Heart right ventricle (tissue), 16 donors: ENCODE measurements at regions of chr19 and their contacts with region 1.

Region 1: DNA sequence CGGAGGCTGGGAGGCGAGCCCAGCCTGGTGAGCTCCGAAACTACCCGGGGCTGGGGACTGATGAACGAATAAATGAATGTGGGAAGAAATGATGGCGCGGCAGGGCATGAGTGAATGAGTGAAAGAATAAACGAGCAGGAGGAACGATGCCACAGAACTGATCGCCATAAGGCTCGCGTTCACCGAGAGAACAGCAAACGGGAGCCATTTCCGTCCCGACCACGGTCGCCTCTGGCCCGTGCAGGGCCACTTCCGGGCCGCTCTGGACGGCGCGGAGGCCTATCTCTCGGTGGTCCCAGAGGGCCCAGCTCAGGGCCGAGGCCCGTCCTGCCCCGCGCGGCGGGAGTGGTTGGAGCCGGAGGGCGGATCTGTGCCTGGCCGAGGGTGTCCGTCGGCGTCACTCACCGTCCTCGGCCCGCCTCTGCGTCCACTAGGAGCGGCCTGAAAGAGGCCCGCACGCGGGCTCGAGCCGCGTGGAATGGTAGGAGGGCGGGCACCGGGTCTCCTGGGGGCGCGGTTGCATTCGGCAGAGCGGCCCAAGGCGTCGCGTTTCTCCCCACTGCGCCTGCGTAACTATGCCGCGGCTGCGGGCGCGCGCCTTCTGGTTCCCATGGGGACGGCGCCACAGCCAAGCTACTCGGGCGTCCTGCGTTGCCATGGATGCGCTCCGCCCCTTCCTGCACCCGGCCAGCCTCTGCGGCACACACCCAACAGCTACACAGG is at the start of gene ZNF497:
- DNase-seq: peak; percentile 96 to 98
- ATAC-seq: peak; percentile 96 to 98 (median 97)
- H3K4me3 ChIP-seq: peak within 1 kb of the TSS; percentile 48 to 94 (median 75)
- H3K27ac ChIP-seq: peak within 1 kb of the TSS; percentile 88 to 97 (median 96)
- H3K4me1 ChIP-seq: peaks cover 0 to 23% (median 11%) of the 10 kb centered on the region in 9 donors
- H3K27me3 ChIP-seq: peaks cover 0 to 24% (median 11%) of the 10 kb centered on the region in 7 donors
- CTCF ChIP-seq: peak in 2 of 9 donors; percentile 1 to 12
- total RNA-seq, gene ZNF497: 0.14 to 0.73 (median 0.30) TPM in 9 of 10 donors, not detected in the other

Region 2: DNA sequence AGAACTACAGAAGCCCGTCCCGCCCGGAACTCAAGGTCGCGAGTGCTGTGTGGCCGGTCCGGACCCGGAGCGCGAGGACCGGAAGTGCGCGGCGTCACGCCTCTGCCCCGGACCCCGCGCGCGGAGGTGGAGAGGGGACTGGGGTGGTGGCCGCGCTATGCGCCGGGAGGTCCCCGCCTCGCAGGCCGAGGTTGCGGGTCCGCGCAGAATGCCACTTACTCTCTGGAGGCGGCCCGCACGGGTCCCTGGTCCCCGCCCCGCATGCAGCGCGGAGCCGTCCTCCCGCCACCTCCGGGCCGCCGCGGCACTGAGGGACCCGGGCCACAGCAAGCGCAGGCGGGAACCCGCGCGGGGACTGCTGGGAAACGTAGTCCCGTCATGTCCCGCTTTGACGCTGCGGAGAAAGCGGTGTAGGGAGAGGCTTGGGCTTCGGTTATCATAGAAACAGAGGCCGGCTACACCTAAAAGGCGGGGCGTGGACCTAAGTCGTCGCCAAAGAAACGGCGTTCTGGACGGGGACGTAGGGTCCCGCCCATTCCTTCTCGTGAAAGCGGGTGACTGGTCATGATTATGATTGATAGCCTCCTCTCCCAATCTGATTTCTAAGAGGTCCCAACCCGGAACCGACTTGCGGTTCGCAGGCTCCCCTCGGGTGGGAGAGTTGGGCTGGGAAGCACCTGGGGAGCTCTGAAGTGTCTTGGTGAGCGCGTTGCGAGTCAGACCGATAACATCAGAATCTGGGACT is 18.5 kb after region 1 on chr19 and contains the start of gene ZNF837:
- intact Hi-C with region 1: loop called in 1 of 10 experiments (anchors 2 kb)
- DNase-seq: peak; percentile 97 to 100
- ATAC-seq: peak; percentile 94 to 97 (median 95)
- H3K4me3 ChIP-seq: peak within 1 kb of the TSS; percentile 53 to 96 (median 79)
- H3K27ac ChIP-seq: peak within 1 kb of the TSS; percentile 74 to 98 (median 95)
- H3K4me1 ChIP-seq: peaks cover 15 to 39% (median 25%) of the 10 kb centered on the region in 9 donors
- H3K27me3 ChIP-seq: no peaks in the 10 kb centered on the region
- CTCF ChIP-seq: peak in 2 of 9 donors; percentile 12 to 16
- total RNA-seq, gene ZNF837: 0.11 to 0.90 (median 0.41) TPM